Posterior vena cava (tissue), 2 donors: ENCODE measurements at regions of chr12 and their contacts with region 1.

Region 1: DNA sequence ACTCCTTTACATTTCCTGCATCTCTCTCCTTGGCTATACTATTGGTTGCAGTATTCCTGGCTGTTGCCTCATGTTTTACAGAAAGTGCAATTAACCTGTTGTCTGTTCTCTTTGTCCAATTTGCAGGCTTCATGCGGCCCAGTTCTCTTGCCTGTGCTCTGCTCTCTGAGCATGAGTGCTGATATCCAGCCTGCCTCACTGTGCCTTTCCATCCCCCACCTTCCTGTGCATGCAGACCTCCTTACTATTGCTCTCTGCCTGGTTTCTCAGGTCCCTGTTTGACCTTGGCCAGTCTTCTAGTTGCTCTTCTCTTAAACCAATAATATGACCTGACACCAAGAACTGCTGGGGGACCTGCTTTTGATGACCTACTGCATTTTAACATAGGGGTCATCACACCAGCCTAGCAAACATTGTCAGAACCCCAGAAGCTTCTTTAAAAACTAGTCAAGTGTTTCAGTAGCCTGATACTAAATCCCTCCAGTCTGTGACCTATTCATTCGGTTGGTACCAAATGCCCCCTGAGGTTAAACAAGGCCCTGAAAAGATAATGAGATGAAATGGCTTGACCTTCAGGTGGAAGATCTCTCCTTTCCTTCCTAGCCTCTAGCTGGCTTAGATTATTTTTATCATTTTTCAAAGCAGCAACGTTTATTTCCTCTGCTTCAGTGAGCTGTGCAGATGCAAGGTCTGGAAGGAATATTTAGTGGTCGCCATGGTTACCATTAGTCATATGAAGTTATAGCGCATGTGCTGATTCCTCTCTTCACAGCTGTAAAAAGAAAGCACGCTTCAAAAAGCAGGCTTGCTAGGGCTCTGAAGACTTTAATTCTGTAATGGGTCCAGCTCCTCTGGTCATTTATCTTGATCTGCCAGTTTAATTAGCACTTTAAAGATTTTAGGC is 216.5 kb downstream of the PHLDA1 start:
- DNase-seq: no peak

Region 2: DNA sequence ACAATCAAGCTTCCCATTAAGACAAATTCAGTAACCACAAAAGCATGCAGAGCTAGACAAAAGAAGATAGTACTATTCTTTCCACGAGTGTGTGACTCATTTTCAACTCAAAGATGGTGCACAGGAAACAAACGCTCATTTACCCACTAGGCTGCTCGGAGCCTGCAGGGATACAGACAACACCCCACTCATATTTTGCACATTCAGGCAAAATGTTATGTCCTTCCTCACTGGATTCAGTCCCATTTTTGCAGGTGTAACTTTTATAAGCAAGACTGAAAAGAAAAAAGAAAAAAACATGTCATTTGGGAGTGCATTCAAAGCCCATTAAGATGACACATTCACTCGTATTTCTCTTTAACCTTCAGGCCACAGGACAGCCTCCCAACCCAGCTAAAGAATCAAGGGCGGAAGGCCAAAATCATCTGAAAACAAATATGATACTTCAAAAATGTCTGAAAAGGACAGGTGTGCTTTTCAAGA is 156.2 kb before region 1 on chr12:
- intact Hi-C with region 1: loop called in 1 of 2 experiments (anchors 10 kb)
- DNase-seq: no peak

Region 3: DNA sequence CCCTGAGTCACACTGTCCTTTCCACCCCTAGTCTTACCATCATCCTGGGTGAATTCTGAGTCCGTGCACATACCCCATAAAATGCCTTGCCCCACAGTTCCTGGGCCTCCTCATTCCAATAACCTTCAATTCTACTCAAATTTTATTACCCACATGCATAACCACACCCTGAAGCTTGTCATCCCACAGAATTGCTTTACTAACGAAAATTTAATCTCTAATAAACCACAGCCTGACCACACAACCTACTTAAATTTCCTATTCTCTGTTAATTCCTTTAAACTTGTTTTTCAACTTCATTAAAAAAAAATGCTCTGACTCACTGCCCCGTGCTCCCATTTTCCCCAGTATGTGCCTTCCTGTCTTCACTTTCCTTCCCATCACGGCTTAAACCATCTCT is 10.6 kb after region 1 on chr12:
- intact Hi-C with region 1: no loop called
- DNase-seq: no peak